Head of caudate nucleus (tissue), 42 donors: ENCODE measurements at regions of chr11 and their contacts with region 1.

Region 1: GRCh38 chr11:65083834-65084597 is at the starts of genes CDCA5 and ZFPL1:
- DNase-seq: peak; percentile 93 to 99 (median 98)

Region 2: GRCh38 chr11:65095974-65096806 is 12.2 kb after region 1 on chr11 and contains the start of gene VPS51:
- intact Hi-C with region 1: loop called (anchors 1 kb)
- DNase-seq: peak; percentile 78 to 95 (median 88)